MCF 10A (cell line): ENCODE measurements at regions of chr3 and their contacts with region 1.

Region 1: GRCh38 chr3:186570096-186570940 is at the start of gene DNAJB11:
- DNase-seq: peak; percentile 99
- H3K4me3 Mint-ChIP-seq: peak within 1 kb of the TSS; percentile 79
- H3K27ac Mint-ChIP-seq: peak within 1 kb of the TSS; percentile 97
- H3K4me1 Mint-ChIP-seq: peaks cover 31% of the 10 kb centered on the region
- H3K27me3 Mint-ChIP-seq: no peaks in the 10 kb centered on the region
- CTCF ChIP-seq: no peak
- total RNA-seq, gene DNAJB11: 116 and 166 TPM in 2 replicates

Region 2: DNA sequence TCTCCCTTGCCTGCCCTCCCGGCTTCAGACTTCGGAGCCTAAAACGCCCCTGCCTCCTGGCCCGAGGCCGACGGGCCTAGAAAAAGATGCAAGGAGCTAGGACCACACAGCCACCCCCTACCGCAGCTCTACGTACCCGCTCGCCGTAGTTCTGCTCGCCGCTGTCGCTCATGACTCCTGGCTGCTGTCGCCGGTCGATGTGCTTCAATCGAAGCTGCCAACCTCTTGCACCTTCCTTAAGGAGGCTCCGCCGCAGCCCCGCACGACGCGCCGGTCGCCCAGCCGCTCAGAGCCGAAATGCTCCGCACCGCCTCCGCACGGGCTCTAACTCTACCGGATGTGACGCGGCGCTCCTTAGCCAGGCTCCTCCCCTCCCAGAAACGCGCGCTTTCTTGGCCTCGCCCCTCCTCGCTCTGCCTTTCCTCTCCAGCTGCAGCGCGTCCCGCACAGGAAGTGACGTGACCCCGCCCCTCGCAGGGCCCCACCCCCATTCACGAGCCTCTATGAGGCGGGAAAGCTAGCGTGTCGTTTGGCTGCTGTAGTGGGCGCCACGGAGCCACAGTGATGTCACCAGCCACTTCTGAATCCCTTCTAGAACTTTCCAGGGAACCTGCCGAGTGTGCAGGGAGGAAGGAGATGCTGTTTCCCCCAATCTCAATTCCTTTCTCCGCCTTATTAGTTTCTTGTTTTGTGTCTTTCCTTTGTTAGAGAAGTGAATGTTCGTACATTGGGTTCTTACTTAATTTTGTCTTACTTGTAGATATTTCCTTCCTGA is 632.4 kb before region 1 on chr3 and contains the start of gene TRA2B:
- CTCF ChIA-PET with region 1: no interaction called
- POLR2A ChIA-PET with region 1: interaction called, 25 read pairs
- intact Hi-C with region 1: no loop called
- DNase-seq: peak; percentile 99
- H3K4me3 Mint-ChIP-seq: peak within 1 kb of the TSS; percentile 98
- H3K27ac Mint-ChIP-seq: peak within 1 kb of the TSS; percentile 100
- H3K4me1 Mint-ChIP-seq: peaks cover 17% of the 10 kb centered on the region
- H3K27me3 Mint-ChIP-seq: no peaks in the 10 kb centered on the region
- CTCF ChIP-seq: no peak
- total RNA-seq, gene TRA2B: 212 and 246 TPM in 2 replicates

Region 3: GRCh38 chr3:186365202-186365974 is 204.9 kb before region 1 on chr3:
- CTCF ChIA-PET with region 1: no interaction called
- POLR2A ChIA-PET with region 1: no interaction called
- intact Hi-C with region 1: no loop called
- DNase-seq: peak; percentile 77
- H3K4me3 Mint-ChIP-seq: no peak overlapping the region
- H3K27ac Mint-ChIP-seq: no peak overlapping the region
- H3K4me1 Mint-ChIP-seq: no peaks in the 10 kb centered on the region
- H3K27me3 Mint-ChIP-seq: peaks cover 63% of the 10 kb centered on the region
- CTCF ChIP-seq: no peak

Region 4: DNA sequence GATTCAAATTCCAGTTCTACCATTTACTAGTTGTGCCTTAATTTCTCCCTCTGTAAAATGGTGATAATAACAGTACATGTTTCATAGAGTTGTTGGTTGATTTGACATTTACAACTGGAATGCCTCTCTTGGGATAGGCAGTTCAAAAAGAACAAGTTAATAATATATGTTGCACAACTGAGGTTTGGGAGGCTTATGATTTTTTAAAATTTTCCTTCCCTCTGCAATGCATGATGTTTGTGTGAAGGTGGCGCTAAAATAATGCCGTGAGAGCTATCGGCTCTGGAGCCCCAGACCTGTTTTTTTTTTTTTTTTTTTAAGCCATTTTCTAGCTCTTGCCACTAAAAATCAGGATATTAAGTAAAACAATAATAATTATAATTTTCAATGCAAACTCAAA is 18.8 kb after region 1 on chr3:
- CTCF ChIA-PET with region 1: interaction called, 6 read pairs
- POLR2A ChIA-PET with region 1: interaction called, 161 read pairs
- intact Hi-C with region 1: no loop called
- DNase-seq: peak; percentile 73
- H3K4me3 Mint-ChIP-seq: peak overlapping the region; percentile 47
- H3K27ac Mint-ChIP-seq: peak overlapping the region; percentile 86
- H3K4me1 Mint-ChIP-seq: peaks cover 25% of the 10 kb centered on the region
- H3K27me3 Mint-ChIP-seq: no peaks in the 10 kb centered on the region
- CTCF ChIP-seq: peak; percentile 33

Region 5: GRCh38 chr3:186609247-186609868 is 39.0 kb after region 1 on chr3:
- CTCF ChIA-PET with region 1: interaction called, 50 read pairs
- POLR2A ChIA-PET with region 1: interaction called, 28 read pairs
- intact Hi-C with region 1: loop called (anchors 1 kb)
- DNase-seq: peak; percentile 74
- H3K4me3 Mint-ChIP-seq: no peak overlapping the region
- H3K27ac Mint-ChIP-seq: peak overlapping the region; percentile 27
- H3K4me1 Mint-ChIP-seq: peaks cover 7% of the 10 kb centered on the region
- H3K27me3 Mint-ChIP-seq: no peaks in the 10 kb centered on the region
- CTCF ChIP-seq: peak; percentile 57

Region 6: DNA sequence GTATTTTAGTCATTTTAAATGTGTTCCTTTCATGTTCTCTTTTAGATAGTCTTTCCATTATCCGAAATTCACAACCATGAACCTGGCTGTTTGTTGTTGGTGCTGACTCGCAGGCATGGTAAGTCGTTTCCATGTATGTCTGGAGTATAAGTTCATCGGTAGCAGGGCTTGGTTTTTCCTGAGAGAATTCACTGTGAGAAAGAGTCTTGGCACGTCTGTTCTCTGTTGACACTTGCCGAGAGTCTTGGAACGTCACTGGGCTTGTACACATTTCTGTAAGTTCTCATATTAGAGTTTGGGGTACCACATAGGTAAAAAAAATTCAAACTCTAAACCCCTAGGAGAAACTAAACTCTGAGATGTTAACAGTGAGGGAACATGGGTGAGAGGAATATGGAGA is 183.7 kb after region 1 on chr3:
- CTCF ChIA-PET with region 1: no interaction called
- POLR2A ChIA-PET with region 1: interaction called, 18 read pairs
- intact Hi-C with region 1: loop called (anchors 1 kb)
- DNase-seq: peak; percentile 55
- H3K4me3 Mint-ChIP-seq: peak overlapping the region; percentile 71
- H3K27ac Mint-ChIP-seq: peak overlapping the region; percentile 97
- H3K4me1 Mint-ChIP-seq: peaks cover 13% of the 10 kb centered on the region
- H3K27me3 Mint-ChIP-seq: no peaks in the 10 kb centered on the region
- CTCF ChIP-seq: no peak

Region 7: GRCh38 chr3:186806089-186807055 is 236.1 kb after region 1 on chr3 and contains the start of gene RFC4:
- CTCF ChIA-PET with region 1: no interaction called
- POLR2A ChIA-PET with region 1: interaction called, 10 read pairs
- intact Hi-C with region 1: no loop called
- DNase-seq: peak; percentile 77
- H3K4me3 Mint-ChIP-seq: peak within 1 kb of the TSS; percentile 79
- H3K27ac Mint-ChIP-seq: peak within 1 kb of the TSS; percentile 83
- H3K4me1 Mint-ChIP-seq: peaks cover 6% of the 10 kb centered on the region
- H3K27me3 Mint-ChIP-seq: no peaks in the 10 kb centered on the region
- CTCF ChIP-seq: no peak
- total RNA-seq, gene RFC4: 23.9 and 33.2 TPM in 2 replicates

Region 8: DNA sequence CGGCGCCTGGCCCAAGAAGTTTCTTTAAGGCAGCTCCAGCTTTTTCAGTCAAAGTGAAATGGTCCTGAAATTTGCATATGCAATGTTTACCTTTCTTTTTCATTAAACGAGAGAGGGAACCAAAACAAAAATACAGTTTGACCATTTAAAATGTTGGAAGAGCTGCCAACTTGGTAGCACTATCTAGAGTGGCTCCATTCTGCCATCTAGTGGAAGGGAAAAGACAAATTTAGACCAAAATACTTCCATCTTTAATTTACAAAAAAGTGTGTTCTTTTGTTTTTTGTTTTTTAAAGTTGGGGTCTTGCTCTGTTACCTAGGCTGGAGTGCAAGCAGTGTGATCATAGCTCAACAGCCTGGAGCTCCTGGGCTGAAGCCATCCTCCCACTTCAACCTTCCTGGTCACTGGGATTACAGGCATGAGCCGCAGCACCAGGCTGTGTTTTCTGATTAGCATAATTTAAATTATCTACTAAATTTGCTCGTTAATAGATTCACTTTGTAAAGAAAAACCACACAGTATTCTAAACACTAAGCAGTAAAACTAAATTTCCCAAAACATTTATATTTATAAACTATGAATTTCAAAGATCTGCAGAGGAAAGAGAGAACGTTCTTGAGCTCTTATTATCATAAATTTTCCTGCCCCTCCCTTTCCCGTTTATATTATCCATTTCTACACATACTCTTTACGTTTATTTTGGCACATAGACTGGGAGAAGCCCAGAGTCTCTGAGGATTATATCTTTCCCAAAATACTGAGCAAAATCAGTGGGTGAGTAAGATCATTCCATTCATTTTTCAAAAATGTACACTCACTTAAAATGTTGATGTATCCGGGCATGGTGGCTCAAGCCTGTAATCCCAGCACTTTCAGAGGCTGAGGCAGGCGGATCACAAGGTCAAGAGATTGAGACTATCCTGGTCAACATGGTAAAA is 251.4 kb after region 1 on chr3:
- CTCF ChIA-PET with region 1: interaction called, 4 read pairs
- POLR2A ChIA-PET with region 1: interaction called, 4 read pairs
- intact Hi-C with region 1: loop called (anchors 1 kb)
- DNase-seq: peak; percentile 78
- H3K4me3 Mint-ChIP-seq: no peak overlapping the region
- H3K27ac Mint-ChIP-seq: no peak overlapping the region
- H3K4me1 Mint-ChIP-seq: peaks cover 19% of the 10 kb centered on the region
- H3K27me3 Mint-ChIP-seq: no peaks in the 10 kb centered on the region
- CTCF ChIP-seq: peak; percentile 66